ENCODE measurements at regions of chr9 and their contacts with region 1.

Region 1: GRCh38 chr9:88741335-88741734 is 206.4 kb downstream of the NXNL2 start:
- DNase-seq: no peak
- H3K4me3 ChIP-seq: no peak overlapping the region
- H3K4me3 Mint-ChIP-seq: no peak overlapping the region
- H3K27ac Mint-ChIP-seq: no peak overlapping the region
- H3K4me1 ChIP-seq: no peaks in the 10 kb centered on the region
- H3K4me1 Mint-ChIP-seq: peaks cover 7% of the 10 kb centered on the region
- H3K27me3 ChIP-seq: no peaks in the 10 kb centered on the region
- H3K27me3 Mint-ChIP-seq: no peaks in the 10 kb centered on the region
- CTCF ChIP-seq: no peak

Region 2: GRCh38 chr9:88593537-88594185 is 147.7 kb before region 1 on chr9:
- CTCF ChIA-PET with region 1: no interaction called
- POLR2A ChIA-PET with region 1: no interaction called
- intact Hi-C with region 1: loop called (anchors 5 kb)
- DNase-seq: peak in 1 of 2 experiments; percentile 45
- H3K4me3 ChIP-seq: no peak overlapping the region
- H3K4me3 Mint-ChIP-seq: no peak overlapping the region
- H3K27ac Mint-ChIP-seq: no peak overlapping the region
- H3K4me1 ChIP-seq: no peaks in the 10 kb centered on the region
- H3K4me1 Mint-ChIP-seq: no peaks in the 10 kb centered on the region
- H3K27me3 ChIP-seq: no peaks in the 10 kb centered on the region
- H3K27me3 Mint-ChIP-seq: peaks cover 3% of the 10 kb centered on the region
- CTCF ChIP-seq: peak in 1 of 2 experiments; percentile 50

Region 3: DNA sequence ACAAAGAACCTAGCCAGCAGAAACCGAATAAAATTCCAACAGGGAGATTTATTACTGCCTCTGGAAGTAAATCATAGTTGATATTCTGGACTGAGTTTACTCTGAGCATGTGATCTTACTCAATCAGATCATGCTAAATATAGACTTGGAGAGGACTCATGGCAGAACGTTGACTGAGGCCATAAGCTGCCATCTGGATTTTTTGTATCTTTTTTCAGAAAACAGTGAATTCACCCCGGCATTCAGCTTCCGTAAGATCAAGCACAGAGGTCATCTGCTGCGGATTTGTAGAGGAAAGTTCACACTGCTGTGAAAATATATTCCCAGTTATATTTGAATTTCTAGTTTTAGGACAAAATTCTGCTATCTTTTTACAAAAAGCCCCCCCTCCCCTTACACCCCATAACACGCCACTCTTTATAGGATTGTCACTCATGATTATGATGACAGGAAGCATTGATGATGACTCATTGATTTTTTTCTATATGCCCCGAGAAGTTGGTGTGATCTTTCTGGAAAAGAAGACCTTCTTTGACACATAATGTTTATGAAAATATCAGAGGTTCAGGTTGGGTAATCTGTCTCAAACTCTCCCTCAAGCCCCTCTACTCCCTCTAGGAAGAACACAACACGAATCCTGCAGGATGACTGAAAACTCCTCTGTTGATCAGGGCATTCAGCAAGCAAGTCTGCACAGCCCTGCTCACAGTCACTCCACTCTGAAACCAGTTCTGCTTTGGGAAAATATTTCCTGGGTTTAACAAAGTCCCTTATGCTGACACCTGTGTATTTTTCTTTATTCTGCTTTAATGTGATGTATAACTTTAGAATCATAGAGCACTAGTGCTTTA is 135.6 kb before region 1 on chr9:
- CTCF ChIA-PET with region 1: no interaction called
- POLR2A ChIA-PET with region 1: no interaction called
- intact Hi-C with region 1: no loop called
- DNase-seq: no peak
- H3K4me3 ChIP-seq: no peak overlapping the region
- H3K4me3 Mint-ChIP-seq: no peak overlapping the region
- H3K27ac Mint-ChIP-seq: no peak overlapping the region
- H3K4me1 ChIP-seq: no peaks in the 10 kb centered on the region
- H3K4me1 Mint-ChIP-seq: no peaks in the 10 kb centered on the region
- H3K27me3 ChIP-seq: no peaks in the 10 kb centered on the region
- H3K27me3 Mint-ChIP-seq: peaks cover 3% of the 10 kb centered on the region
- CTCF ChIP-seq: no peak

Region 4: GRCh38 chr9:88660611-88661010 is 80.7 kb before region 1 on chr9:
- CTCF ChIA-PET with region 1: no interaction called
- POLR2A ChIA-PET with region 1: no interaction called
- intact Hi-C with region 1: loop called (anchors 5 kb)
- DNase-seq: peak; percentile 35 to 46
- H3K4me3 ChIP-seq: no peak overlapping the region
- H3K4me3 Mint-ChIP-seq: no peak overlapping the region
- H3K27ac Mint-ChIP-seq: no peak overlapping the region
- H3K4me1 ChIP-seq: no peaks in the 10 kb centered on the region
- H3K4me1 Mint-ChIP-seq: no peaks in the 10 kb centered on the region
- H3K27me3 ChIP-seq: no peaks in the 10 kb centered on the region
- H3K27me3 Mint-ChIP-seq: no peaks in the 10 kb centered on the region
- CTCF ChIP-seq: peak; percentile 23 to 39